ENCODE measurements at regions of chr15 and their contacts with region 1.

Region 1: GRCh38 chr15:90013503-90013937 is 12.4 kb downstream of the ZNF710 start:
- DNase-seq: no peak
- H3K4me3 ChIP-seq: no peak overlapping the region
- CTCF ChIP-seq: no peak

Region 2: GRCh38 chr15:89926158-89926557 is 87.4 kb before region 1 on chr15:
- in situ Hi-C with region 1: no loop called
- DNase-seq: no peak
- H3K4me3 ChIP-seq: no peak overlapping the region
- CTCF ChIP-seq: no peak

Region 3: DNA sequence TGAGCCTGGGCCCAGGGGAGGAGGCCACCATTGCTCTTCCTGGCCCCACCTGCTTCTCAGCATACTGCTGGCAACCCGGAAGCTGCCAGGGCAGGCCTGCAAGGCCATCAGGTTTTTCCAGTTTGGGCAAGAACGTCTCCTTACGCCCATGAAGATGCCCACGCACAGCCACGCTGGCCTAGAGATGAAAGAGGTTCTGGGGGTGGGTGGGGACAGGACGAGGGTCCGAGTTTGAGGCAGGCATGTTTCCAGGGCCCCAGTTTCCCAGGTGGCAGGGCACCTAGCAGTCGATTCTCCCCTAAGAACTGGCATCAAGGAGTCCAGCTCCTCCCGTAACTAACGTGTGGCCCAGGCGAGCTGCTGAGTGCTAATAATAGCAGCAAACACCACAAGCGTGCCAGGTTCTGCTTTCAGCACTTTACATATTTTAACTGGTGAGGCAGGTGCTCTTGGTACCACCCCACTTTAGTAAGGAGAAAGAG is 33.4 kb after region 1 on chr15:
- in situ Hi-C with region 1: loop called (anchors 5 kb)
- DNase-seq: no peak
- H3K4me3 ChIP-seq: no peak overlapping the region
- CTCF ChIP-seq: no peak